GM12878 (cell line): ENCODE measurements at regions of chr6 and their contacts with region 1.

Region 1: DNA sequence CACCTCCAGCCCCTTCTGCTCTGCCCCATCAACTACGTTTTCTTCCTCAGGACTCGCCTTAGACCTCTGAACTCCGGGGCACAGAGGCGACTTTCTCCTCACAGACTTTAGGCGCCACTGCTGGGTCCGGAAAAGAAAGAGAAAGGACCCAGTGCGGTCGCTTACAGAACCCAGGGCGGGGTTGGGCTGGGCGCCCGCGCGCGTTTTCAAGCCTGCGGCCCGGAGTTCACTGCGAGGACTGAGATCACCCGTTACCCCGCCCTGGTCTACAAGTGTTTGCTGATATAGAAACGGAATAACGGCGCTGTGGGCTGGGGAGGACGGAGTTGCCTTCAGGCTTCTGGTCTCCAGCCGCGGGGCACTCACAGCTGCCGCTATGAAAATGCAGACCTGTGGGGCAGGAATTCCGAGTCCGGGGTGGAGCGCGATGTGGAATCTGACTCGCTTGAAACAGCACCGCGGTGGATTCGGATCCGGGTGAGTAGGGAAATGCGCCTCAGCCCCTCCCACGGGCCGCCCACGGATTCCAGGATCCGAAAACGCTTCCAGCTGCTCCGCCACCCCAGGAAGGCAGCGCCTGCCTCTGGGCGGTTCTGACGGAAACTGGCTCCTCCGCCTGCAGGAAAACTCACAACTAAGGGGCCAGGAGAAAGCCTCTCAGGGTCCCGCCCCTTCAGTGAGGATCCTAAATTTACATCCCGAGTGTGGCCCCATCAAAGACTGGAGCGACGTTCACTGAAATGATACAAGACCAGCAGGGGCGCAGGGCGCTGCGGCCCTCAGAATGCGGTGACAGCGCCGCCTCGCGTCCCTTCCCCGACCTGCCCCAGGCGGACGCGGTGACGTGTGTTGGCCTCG is 29.4 kb downstream of the HLA-F start:
- DNase-seq: peak; percentile 54
- ATAC-seq: peak; percentile 85
- H3K4me3 ChIP-seq: peak overlapping the region; percentile 66
- H3K27ac ChIP-seq: peak overlapping the region; percentile 84
- H3K4me1 ChIP-seq: peaks cover 10% of the 10 kb centered on the region
- H3K27me3 ChIP-seq: no peaks in the 10 kb centered on the region
- CTCF ChIP-seq: peak; percentile 99 to 100 (median 100); a peak in 5 of 6 replicates
- EP300 ChIP-seq: no peak
- POLR2A ChIP-seq: peak; percentile 58; the same call in 1 of the 2 replicates
- RAD21 ChIP-seq: peak; percentile 83

Region 2: GRCh38 chr6:29705389-29706231 is 47.1 kb before region 1 on chr6:
- CTCF ChIA-PET with region 1: interaction called, 12 read pairs
- POLR2A ChIA-PET with region 1: interaction called, 3 read pairs
- RAD21 ChIA-PET with region 1: interaction called, 6 read pairs
- SMC1A ChIA-PET with region 1: interaction called, 7 read pairs
- in situ Hi-C with region 1: no loop called
- intact Hi-C with region 1: loop called (anchors 1 kb)
- DNase-seq: no peak
- ATAC-seq: no peak
- H3K4me3 ChIP-seq: no peak overlapping the region
- H3K27ac ChIP-seq: no peak overlapping the region
- H3K4me1 ChIP-seq: peaks cover 11% of the 10 kb centered on the region; the same call in 1 of the 2 replicates
- H3K27me3 ChIP-seq: no peaks in the 10 kb centered on the region
- CTCF ChIP-seq: peak; percentile 34 to 54 (median 46); a peak in 5 of 6 replicates
- EP300 ChIP-seq: no peak
- POLR2A ChIP-seq: no peak
- RAD21 ChIP-seq: peak; percentile 60

Region 3: DNA sequence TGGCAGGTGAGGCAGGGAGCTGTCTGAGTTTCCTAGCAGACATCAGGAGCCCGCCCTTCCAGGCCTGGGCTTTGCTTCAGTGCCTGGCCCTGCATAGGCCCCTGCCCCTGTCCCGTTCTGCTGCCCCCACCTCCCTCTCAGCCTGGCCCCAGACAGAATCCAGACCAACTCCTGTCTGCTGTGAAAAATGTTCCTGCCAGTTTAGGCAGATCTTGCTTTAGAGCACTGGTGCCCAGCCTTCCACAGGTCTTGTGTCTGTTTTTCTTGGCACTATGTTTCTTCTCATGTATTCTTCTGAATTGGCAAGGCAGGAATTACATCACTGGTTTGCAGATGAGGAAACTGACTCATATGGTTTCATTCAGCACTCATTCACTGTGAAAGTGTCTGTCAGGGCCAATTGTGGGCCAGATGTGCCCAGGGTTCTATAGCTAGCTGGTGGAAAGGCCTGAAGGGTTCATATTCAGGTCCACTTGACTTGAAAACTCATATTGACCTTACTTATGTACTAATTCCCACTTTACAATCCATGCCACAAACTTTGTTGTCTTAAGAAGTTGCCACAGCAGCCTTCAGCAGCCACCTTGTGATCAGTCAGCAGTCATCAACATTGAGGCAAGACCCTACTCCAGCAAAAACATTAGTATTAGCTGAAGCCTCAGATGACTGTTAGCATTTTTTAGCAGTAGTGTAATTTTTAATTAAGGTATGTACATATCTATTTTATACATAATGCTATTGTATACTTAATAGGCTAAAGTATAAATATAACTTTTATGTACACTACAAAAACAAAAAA is 11.0 kb after region 1 on chr6:
- CTCF ChIA-PET with region 1: interaction called, 13 read pairs
- POLR2A ChIA-PET with region 1: interaction called, 5 read pairs
- RAD21 ChIA-PET with region 1: interaction called, 3 read pairs
- SMC1A ChIA-PET with region 1: interaction called, 8 read pairs
- in situ Hi-C with region 1: no loop called
- intact Hi-C with region 1: no loop called
- DNase-seq: no peak
- ATAC-seq: peak; percentile 86
- H3K4me3 ChIP-seq: no peak overlapping the region
- H3K27ac ChIP-seq: no peak overlapping the region
- H3K4me1 ChIP-seq: peaks cover 8% of the 10 kb centered on the region
- H3K27me3 ChIP-seq: no peaks in the 10 kb centered on the region
- CTCF ChIP-seq: no peak
- EP300 ChIP-seq: no peak
- POLR2A ChIP-seq: no peak
- RAD21 ChIP-seq: no peak